Transverse colon (tissue), 4 donors: ENCODE measurements at regions of chr10 and their contacts with region 1.

Region 1: DNA sequence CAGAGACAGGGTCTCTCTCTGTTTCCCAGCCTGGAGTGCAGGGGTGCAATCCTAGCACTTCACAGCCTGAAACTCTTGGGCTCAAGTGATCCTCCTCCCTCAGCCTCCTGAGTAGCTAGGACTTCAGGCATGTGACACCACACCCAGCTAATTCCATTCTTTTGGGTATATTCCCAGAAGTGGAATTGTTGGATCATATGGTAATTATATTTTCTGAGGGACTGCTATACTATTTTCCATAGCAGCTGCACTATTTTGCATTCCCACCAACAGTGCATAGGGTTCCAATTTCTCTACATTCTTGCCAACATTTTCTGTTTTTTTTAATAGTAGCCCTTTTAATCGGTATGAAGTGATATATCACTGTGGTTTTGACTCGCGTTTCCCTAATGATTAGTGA is 30.0 kb upstream of the RAB11FIP2 start:
- DNase-seq: no peak
- H3K4me3 ChIP-seq: no peak overlapping the region
- H3K27ac ChIP-seq: no peak overlapping the region
- H3K4me1 ChIP-seq: no peaks in the 10 kb centered on the region
- H3K27me3 ChIP-seq: no peaks in the 10 kb centered on the region
- CTCF ChIP-seq: no peak
- EP300 ChIP-seq: no peak
- POLR2A ChIP-seq: no peak

Region 2: GRCh38 chr10:118116715-118117449 is 40.2 kb after region 1 on chr10:
- in situ Hi-C with region 1: no loop called
- intact Hi-C with region 1: loop called (anchors 1 kb)
- DNase-seq: no peak
- H3K4me3 ChIP-seq: no peak overlapping the region
- H3K27ac ChIP-seq: peak overlapping the region in 3 of 4 donors; percentile 32 to 46 (median 44)
- H3K4me1 ChIP-seq: peaks cover 0 to 9% (median 0%) of the 10 kb centered on the region in 4 donors
- H3K27me3 ChIP-seq: no peaks in the 10 kb centered on the region
- CTCF ChIP-seq: no peak
- EP300 ChIP-seq: no peak
- POLR2A ChIP-seq: no peak